Mammary epithelial cell (primary cell): ENCODE measurements at regions of chr10 and their contacts with region 1.

Region 1: GRCh38 chr10:110871298-110872084 is at the start of gene PDCD4:
- DNase-seq: peak; percentile 96
- H3K4me3 ChIP-seq: peak within 1 kb of the TSS; percentile 85 to 93 (median 92)
- H3K27ac ChIP-seq: peak within 1 kb of the TSS; percentile 88
- H3K4me1 ChIP-seq: peaks cover 4% of the 10 kb centered on the region
- H3K27me3 ChIP-seq: no peaks in the 10 kb centered on the region
- CTCF ChIP-seq: no peak
- total RNA-seq, gene PDCD4: 123 to 133 TPM

Region 2: GRCh38 chr10:110336111-110336721 is 535.3 kb before region 1 on chr10:
- CTCF ChIA-PET with region 1: no interaction called
- dilution Hi-C with region 1: loop called (anchors 25 kb)
- in situ Hi-C with region 1: no loop called
- intact Hi-C with region 1: no loop called
- DNase-seq: peak; percentile 87
- H3K4me3 ChIP-seq: no peak overlapping the region
- H3K27ac ChIP-seq: peak overlapping the region; percentile 13
- H3K4me1 ChIP-seq: peaks cover 16% of the 10 kb centered on the region
- H3K27me3 ChIP-seq: no peaks in the 10 kb centered on the region
- CTCF ChIP-seq: peak in 1 of 2 donors; percentile 23

Region 3: DNA sequence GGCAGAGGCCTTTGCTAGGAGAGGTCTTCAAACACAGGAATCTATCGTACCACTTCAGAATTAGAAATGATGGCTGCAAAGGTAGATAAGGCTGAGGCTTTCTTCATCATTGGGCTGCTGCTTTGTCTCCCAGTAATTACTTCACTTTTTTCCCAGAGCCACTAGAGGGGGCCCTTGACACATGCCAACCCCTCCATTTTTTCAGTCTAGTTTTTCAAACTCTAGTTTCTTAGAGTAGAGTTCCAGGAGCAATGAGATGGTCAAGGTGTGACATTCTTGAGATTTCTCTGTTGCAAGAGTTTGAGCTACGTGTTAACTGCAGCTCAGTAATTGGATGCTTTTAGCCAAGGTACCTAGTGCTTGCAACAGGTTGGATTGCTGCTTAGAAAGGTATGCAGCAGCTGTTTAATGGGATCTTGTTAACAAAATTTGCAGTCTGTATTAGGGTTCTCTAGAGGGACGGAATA is 261.1 kb before region 1 on chr10:
- CTCF ChIA-PET with region 1: no interaction called
- dilution Hi-C with region 1: no loop called
- in situ Hi-C with region 1: loop called in 1 of 2 experiments (anchors 25 kb)
- intact Hi-C with region 1: loop called (anchors 1 kb)
- DNase-seq: peak; percentile 46
- H3K4me3 ChIP-seq: no peak overlapping the region
- H3K27ac ChIP-seq: no peak overlapping the region
- H3K4me1 ChIP-seq: peaks cover 9% of the 10 kb centered on the region
- H3K27me3 ChIP-seq: no peaks in the 10 kb centered on the region
- CTCF ChIP-seq: peak; percentile 89 to 90

Region 4: DNA sequence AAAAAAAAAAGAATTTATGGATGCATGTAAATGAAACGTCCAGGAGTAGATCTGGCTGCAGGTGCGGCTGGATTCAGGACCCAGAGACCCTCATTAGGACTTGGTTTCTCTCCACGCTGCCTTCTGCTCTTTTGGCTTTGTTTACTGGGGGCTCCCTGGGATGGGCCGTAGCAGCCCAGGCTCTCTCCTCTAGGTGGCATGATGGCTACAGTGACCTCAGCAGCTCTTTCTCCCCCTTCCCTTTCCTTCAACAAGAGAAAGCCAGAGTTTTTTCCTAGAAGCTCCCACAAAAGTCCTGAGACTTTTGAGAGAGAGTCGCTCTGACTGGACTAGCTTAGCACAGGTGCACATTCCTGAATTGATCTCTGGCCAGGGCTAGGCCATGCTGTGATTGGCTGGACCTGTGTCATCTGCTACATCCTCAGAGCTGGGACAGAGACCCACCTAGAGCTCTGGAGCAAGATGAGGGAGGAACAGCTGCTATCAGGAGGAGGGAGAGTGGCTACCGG is 67.6 kb before region 1 on chr10:
- CTCF ChIA-PET with region 1: no interaction called
- dilution Hi-C with region 1: no loop called
- in situ Hi-C with region 1: no loop called
- intact Hi-C with region 1: loop called (anchors 1 kb)
- DNase-seq: peak; percentile 40
- H3K4me3 ChIP-seq: no peak overlapping the region
- H3K27ac ChIP-seq: no peak overlapping the region
- H3K4me1 ChIP-seq: peaks cover 14% of the 10 kb centered on the region
- H3K27me3 ChIP-seq: no peaks in the 10 kb centered on the region
- CTCF ChIP-seq: peak; percentile 40 to 69

Region 5: GRCh38 chr10:110852255-110852896 is 19.1 kb before region 1 on chr10:
- CTCF ChIA-PET with region 1: no interaction called
- dilution Hi-C with region 1: no loop called
- in situ Hi-C with region 1: no loop called
- intact Hi-C with region 1: loop called (anchors 1 kb)
- DNase-seq: peak; percentile 99
- H3K4me3 ChIP-seq: no peak overlapping the region
- H3K27ac ChIP-seq: peak overlapping the region; percentile 84
- H3K4me1 ChIP-seq: peaks cover 39% of the 10 kb centered on the region
- H3K27me3 ChIP-seq: no peaks in the 10 kb centered on the region
- CTCF ChIP-seq: no peak

Region 6: GRCh38 chr10:111275091-111275490 is 403.6 kb after region 1 on chr10:
- CTCF ChIA-PET with region 1: no interaction called
- dilution Hi-C with region 1: no loop called
- in situ Hi-C with region 1: no loop called
- intact Hi-C with region 1: no loop called
- DNase-seq: no peak
- H3K4me3 ChIP-seq: no peak overlapping the region
- H3K27ac ChIP-seq: no peak overlapping the region
- H3K4me1 ChIP-seq: no peaks in the 10 kb centered on the region
- H3K27me3 ChIP-seq: no peaks in the 10 kb centered on the region
- CTCF ChIP-seq: no peak